Calu3 (cell line): ENCODE measurements at regions of chr3 and their contacts with region 1.

Region 1: DNA sequence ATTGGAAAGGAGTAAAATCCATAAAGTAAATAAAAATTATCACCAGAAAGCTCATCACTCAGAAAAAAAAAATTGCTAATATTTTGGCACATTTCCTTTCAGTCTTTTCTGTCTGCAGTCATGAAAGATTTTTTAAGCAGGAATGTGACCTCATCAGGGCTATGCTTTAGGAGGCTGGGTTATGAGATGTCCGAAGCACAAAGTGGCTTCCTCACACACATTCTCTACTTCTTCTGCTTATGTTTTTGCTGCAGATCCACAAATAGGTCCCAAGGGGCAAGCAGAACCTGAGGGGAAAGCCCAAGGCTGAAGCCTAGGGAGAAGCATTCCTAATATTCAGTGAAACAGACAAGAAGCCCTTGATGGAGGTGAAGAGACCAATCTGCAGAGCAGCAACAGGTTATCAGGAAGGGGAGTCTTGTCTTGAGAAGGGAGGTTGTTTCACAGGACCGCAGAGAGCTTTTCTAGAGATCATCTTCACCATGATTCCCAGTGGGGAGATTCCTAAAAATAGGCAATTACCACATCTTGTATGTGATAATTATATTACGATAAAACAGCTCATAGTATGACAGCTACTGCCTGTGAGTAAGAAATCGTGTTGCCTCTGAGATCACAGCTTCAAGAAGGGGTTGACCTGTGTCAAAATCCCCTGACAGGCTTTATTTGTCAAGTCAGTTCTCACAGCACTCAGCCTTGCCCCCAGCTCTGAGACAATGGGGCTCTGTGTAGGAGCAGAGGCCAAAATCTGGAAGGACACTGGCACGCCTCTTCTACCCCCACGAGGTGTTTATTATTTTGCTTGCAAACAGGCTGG is 60.5 kb downstream of the IGF2BP2 start:
- DNase-seq: peak; percentile 33
- H3K4me3 Mint-ChIP-seq: no peak overlapping the region
- H3K27ac Mint-ChIP-seq: no peak overlapping the region
- H3K4me1 Mint-ChIP-seq: peaks cover 86% of the 10 kb centered on the region
- H3K27me3 Mint-ChIP-seq: no peaks in the 10 kb centered on the region
- CTCF ChIP-seq: no peak

Region 2: DNA sequence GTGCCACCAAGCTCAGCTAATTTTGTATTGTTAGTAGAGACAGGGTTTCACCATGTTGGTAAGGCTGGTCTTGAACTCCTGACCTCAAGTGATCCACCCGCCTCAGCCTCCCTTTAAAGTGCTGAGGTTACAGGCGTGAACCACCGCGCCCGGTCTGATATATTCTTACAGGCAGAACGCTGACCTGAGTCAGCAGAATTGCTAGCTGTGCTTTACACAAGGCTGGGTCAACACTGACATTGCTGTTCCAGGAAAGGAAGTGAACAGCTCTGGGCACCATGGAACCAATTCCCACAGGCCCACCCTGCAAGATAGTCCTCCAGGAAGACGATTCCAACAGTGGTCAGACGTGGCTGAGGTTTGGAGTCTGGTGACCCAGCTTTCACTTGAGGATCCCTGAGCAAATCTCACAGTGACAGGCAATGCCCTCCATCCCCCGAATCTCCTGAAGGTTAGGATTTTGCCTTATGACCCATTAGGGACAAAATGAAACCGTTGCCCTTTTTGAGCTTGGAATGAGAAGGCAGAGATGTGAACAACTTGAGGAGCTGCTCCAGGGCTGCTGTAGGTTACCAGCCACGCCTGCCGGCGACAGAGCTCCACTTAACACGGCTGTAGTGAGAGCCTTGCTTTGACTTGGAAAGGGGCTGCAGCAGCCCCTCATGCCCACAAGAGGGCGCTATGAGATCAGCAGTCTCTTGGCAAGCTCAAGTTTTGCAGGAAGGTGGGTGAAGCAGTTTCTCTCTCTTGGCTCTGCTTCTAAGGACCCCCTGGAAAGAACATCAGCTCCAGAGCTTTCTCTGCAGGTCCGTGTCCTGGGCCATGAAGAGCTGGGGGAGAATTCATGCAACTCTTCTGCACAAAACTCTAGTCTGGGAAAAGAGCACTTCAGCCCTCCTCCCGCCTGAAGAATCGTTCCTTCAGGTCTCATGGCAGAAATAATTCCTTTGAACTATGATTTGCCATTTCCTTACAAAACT is 104.1 kb before region 1 on chr3:
- CTCF ChIA-PET with region 1: interaction called, 30 read pairs
- intact Hi-C with region 1: loop called (anchors 5 kb)
- DNase-seq: peak; percentile 86
- H3K4me3 Mint-ChIP-seq: no peak overlapping the region
- H3K27ac Mint-ChIP-seq: no peak overlapping the region
- H3K4me1 Mint-ChIP-seq: peaks cover 12% of the 10 kb centered on the region
- H3K27me3 Mint-ChIP-seq: no peaks in the 10 kb centered on the region
- CTCF ChIP-seq: peak; percentile 99

Region 3: DNA sequence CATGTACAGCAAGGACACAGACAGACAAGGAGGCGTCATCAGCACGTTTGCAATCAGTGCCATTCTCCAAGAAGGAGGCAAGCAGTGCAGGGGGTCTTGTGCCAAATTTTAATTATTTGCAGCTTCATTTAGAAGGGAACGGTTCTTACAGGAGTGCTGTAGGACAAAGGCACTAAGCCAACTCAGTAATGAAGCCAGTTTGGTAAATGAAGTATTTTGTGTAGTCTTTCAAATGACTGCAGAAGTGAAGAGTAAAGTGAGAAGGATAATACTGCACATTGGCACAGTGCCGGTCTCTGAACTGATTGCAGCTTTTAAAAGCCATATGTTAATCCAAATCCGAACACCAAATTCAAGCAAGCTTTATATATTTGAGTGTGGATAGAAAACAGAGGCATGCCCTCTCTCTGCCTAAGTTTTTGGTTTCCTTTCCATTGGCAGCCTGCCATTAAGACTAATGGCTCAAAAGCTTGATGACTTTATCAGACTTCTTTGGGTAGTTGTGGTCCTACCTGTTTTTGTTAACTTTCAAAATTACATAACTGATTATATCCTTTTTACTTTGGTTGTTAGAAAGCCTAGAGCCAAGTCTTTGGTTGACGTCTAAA is 77.0 kb before region 1 on chr3:
- CTCF ChIA-PET with region 1: interaction called, 10 read pairs
- intact Hi-C with region 1: no loop called
- DNase-seq: peak; percentile 25
- H3K4me3 Mint-ChIP-seq: no peak overlapping the region
- H3K27ac Mint-ChIP-seq: peak overlapping the region; percentile 98
- H3K4me1 Mint-ChIP-seq: peaks cover 36% of the 10 kb centered on the region
- H3K27me3 Mint-ChIP-seq: no peaks in the 10 kb centered on the region
- CTCF ChIP-seq: no peak

Region 4: GRCh38 chr3:185733980-185734724 is 30.2 kb before region 1 on chr3:
- CTCF ChIA-PET with region 1: interaction called, 25 read pairs
- intact Hi-C with region 1: loop called (anchors 1 kb)
- DNase-seq: peak; percentile 82
- H3K4me3 Mint-ChIP-seq: no peak overlapping the region
- H3K27ac Mint-ChIP-seq: peak overlapping the region; percentile 28
- H3K4me1 Mint-ChIP-seq: peaks cover 52% of the 10 kb centered on the region
- H3K27me3 Mint-ChIP-seq: no peaks in the 10 kb centered on the region
- CTCF ChIP-seq: peak; percentile 92

Region 5: GRCh38 chr3:185789891-185790830 is 25.8 kb after region 1 on chr3:
- CTCF ChIA-PET with region 1: interaction called, 14 read pairs
- intact Hi-C with region 1: no loop called
- DNase-seq: peak; percentile 54
- H3K4me3 Mint-ChIP-seq: peak overlapping the region; percentile 23
- H3K27ac Mint-ChIP-seq: peak overlapping the region; percentile 68
- H3K4me1 Mint-ChIP-seq: peaks cover 74% of the 10 kb centered on the region
- H3K27me3 Mint-ChIP-seq: no peaks in the 10 kb centered on the region
- CTCF ChIP-seq: no peak

Region 6: DNA sequence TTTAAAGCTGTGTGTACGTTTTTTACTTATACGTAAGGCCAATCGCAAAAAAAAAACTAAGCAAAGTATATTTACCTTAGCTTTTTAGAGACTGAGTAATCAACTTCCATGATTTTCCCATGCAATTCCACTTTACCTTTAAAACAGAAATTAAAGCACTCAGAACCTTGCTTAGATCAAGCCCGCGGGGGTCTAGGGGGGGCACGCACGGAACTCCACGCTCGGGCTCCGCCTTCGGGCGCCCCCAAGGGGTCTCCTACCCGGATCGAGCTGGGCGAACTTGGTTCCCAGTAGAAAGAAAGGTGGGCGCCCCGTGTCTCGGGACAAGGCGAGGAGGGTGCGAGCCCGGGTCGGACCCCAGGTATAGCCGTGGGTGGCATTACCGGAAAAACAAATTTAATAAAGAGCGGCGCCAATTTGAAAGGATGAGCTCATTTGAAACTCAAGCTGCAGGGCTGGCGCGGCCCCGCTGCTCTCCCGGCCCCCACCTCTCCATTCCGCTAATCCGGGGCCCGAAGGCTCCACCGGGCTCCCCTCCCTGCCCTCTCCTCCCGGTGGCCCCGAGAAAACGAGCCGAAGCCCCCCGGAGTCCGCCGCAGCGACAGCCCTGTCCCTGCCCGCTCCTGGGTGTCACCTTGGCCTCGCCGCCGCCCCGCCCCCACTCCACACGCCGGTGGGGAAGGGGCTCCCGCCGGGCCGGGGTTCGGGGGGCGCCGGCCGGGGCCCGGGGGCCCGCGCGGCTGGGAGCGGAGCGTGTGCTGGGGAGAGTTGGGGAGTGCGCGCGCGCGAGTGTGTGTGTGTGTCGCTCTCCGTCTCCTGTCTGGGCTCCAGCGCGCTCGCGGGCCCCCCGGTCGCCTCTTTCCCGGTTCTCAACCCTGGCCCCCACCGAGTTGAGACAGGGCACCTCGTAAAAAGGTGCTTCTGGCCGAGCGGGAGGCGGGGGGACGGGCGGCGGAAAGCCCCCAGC is 59.0 kb after region 1 on chr3:
- CTCF ChIA-PET with region 1: interaction called, 8 read pairs
- intact Hi-C with region 1: loop called (anchors 2 kb)
- DNase-seq: peak; percentile 56
- H3K4me3 Mint-ChIP-seq: peak overlapping the region; percentile 75
- H3K27ac Mint-ChIP-seq: peak overlapping the region; percentile 98
- H3K4me1 Mint-ChIP-seq: peaks cover 47% of the 10 kb centered on the region
- H3K27me3 Mint-ChIP-seq: no peaks in the 10 kb centered on the region
- CTCF ChIP-seq: no peak